T-cell (primary cell): ENCODE measurements at regions of chr19 and their contacts with region 1.

Region 1: DNA sequence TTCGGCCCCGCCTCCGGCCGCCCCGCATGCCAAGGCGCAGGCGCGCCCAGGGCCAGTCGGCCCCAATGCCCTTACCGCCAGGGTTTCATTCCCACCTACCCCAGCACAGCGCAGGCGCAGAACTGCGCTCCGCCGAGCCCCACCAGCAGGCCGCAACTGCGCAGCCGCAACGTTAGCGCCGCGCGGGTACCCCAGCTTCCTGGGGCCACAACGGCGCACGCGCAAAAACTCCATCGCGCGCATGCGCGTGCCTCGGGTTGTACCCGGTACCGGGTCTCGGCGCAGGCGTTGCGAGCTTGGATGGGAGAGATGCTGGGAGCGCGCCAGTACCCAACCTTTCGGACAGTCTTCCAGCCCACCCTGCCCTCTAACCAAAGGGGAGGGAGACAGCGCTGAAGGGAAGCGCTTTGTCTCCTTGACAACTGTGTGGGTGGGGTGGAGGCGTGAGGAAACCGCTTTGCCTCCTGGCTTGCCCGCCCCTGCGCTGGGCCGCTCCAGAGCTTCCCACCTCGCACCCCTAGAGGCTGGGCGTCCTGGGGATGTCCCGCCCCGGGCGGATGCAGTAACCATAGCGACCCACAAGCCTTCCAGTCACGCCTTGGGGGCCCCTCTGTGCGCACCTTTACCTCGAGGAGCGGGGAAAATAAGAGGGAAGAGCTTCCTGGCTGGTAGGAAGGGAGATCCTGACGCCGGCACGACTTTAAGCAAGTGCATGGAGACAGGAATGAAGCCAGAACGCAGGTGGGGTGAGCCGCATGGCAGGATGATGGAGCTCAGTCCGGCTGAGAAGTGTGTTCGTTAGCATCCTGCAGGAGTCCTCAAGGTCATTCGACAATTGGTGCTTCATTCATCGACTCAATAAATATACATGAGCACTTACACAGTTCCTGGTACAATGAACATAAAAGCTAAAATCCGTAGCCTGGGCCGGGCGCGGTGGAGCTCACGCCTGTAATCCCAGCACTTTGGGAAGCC is 525 bp upstream of the MYPOP start:
- DNase-seq: peak; percentile 96 to 100 (median 99)
- ATAC-seq: peak; percentile 85 to 89 (median 86)
- H3K4me3 ChIP-seq: peak overlapping the region; percentile 83 to 88
- H3K4me3 Mint-ChIP-seq: peak overlapping the region; percentile 91 to 95 (median 93)
- H3K27ac ChIP-seq: peak overlapping the region; percentile 78
- H3K27ac Mint-ChIP-seq: peak overlapping the region; percentile 86 to 89
- H3K4me1 ChIP-seq: peaks cover 4 to 30% of the 10 kb centered on the region in 2 experiments
- H3K4me1 Mint-ChIP-seq: peaks cover 16 to 25% (median 19%) of the 10 kb centered on the region in 3 donors
- H3K27me3 ChIP-seq: peaks cover 0 to 8% of the 10 kb centered on the region in 2 experiments
- H3K27me3 Mint-ChIP-seq: peaks cover 0 to 4% of the 10 kb centered on the region in 2 donors

Region 2: DNA sequence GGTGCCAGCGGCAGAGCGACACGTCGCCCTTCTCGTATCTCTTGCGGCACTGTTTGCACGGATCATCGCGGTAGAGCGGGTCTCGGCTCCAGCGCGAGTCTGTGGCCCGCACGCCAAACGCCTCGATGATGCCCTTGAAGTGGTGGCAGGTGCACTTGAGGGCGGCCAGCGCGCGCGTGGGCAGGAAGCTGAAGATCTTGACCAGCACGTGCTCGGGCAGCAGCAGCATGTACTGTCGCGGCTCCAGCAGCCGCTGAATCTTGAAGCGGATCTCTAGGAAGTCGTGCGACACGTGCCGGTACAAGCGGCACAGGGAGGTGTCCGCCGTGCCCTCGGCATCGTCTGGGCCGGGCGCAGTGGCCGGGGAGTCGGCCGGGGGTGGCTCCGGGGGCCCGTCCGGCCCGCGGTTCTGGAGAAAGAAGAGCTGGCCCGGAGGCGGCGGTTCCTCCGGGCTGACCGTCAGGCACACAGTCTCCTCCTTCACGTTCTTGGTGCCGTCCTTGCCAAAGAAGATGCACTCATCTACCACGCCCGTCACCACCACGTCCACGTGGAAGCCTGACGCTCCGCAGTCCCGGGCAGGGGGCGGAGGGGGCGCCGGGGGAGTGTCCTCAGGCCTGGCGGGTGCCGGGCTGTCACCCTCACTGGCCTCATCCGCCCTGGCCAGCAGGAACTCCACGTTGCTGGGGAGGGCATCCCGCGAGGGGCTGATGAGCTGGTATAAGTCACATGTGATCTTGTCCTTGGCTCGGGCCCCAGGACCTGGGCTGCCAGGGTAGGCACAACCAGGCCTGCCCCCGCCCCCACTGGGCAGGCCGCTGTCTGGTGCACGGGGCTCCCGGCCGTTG is 190.9 kb before region 1 on chr19:
- CTCF ChIA-PET with region 1: interaction called in 1 of 2 experiments, 11 read pairs
- POLR2A ChIA-PET with region 1: no interaction called
- DNase-seq: no peak
- ATAC-seq: no peak
- H3K4me3 ChIP-seq: no peak overlapping the region
- H3K4me3 Mint-ChIP-seq: no peak overlapping the region
- H3K27ac ChIP-seq: no peak overlapping the region
- H3K27ac Mint-ChIP-seq: no peak overlapping the region
- H3K4me1 ChIP-seq: peaks cover 6 to 20% of the 10 kb centered on the region in 2 experiments
- H3K4me1 Mint-ChIP-seq: peaks cover 36 to 42% (median 37%) of the 10 kb centered on the region in 3 donors
- H3K27me3 ChIP-seq: no peaks in the 10 kb centered on the region
- H3K27me3 Mint-ChIP-seq: no peaks in the 10 kb centered on the region

Region 3: DNA sequence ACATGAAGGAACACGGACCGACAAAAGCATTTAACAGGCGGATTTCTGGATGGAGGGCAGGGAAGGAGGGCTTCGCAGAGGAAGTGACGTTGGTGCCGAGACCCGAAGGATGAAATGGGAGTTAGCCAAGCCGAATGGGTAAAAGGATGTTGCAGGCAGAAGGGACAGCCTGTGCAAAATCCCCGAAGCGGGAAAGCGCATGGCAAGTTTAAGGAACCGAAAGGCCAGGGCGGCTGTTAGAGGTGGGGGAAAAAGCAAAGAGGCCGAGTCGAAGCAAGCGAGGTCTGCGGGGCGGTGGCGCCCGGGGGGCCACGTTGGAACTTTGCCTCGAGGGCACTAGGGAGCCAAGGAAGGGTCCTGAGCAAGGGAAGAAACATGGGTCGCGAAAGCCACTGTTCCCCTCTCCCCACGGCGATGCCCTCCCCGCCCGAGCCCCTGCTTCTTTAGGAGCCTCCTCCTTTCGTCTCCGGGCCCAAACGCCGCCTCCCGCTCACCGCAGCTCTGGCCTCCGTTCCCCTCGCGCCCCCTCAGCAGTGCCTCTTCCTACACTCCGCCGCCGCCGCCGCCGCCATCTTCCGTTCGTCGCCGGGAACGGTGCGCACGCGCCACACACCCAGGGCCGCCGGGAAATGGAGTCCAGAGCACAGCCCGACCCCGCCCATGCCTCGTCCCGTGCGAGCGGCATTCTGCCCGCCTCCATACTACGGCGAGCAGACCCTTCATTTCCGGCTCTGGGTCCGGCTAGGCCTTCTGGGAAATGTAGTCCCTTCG is 40.2 kb before region 1 on chr19 and contains the start of gene SYMPK:
- CTCF ChIA-PET with region 1: interaction called in 1 of 2 experiments, 15 read pairs
- POLR2A ChIA-PET with region 1: no interaction called
- DNase-seq: peak; percentile 95 to 99 (median 98)
- ATAC-seq: peak; percentile 96 to 98 (median 98)
- H3K4me3 ChIP-seq: peak within 1 kb of the TSS; percentile 90 to 95
- H3K4me3 Mint-ChIP-seq: peak within 1 kb of the TSS; percentile 92 to 99 (median 95)
- H3K27ac ChIP-seq: peak within 1 kb of the TSS; percentile 86
- H3K27ac Mint-ChIP-seq: peak within 1 kb of the TSS; percentile 70 to 93
- H3K4me1 ChIP-seq: peaks cover 0 to 32% of the 10 kb centered on the region in 2 experiments
- H3K4me1 Mint-ChIP-seq: peaks cover 23 to 43% (median 33%) of the 10 kb centered on the region in 3 donors
- H3K27me3 ChIP-seq: peaks cover 0 to 26% of the 10 kb centered on the region in 2 experiments
- H3K27me3 Mint-ChIP-seq: peaks cover 15 to 18% of the 10 kb centered on the region in 2 donors
- total RNA-seq, gene SYMPK: 89.7 to 102 (median 94.7) TPM

Region 4: DNA sequence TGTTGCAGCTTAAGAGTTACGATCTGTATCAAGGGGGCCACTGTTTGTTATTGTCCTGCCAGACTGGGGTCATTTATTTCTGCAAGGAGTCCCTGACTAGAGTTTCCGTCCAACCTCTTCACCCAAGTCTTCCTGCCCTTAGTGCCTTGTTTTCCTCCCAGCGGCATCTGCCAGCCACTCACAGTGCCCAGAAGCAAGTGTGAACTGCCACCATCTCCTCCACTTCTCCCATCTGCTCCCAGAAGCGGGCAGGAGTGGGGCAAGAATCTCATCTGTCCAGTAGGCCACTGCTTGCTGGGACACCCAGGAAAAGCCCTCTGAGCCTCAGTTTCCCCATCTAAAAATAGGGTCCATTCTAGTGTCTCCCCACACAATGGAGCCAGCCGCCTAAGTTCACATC is 66.7 kb after region 1 on chr19:
- CTCF ChIA-PET with region 1: interaction called in 1 of 2 experiments, 3 read pairs
- POLR2A ChIA-PET with region 1: interaction called in 1 of 2 experiments, 16 read pairs
- DNase-seq: no peak
- ATAC-seq: no peak
- H3K4me3 ChIP-seq: no peak overlapping the region
- H3K4me3 Mint-ChIP-seq: no peak overlapping the region
- H3K27ac ChIP-seq: no peak overlapping the region
- H3K27ac Mint-ChIP-seq: no peak overlapping the region
- H3K4me1 ChIP-seq: peaks cover 2 to 28% of the 10 kb centered on the region in 2 experiments
- H3K4me1 Mint-ChIP-seq: peaks cover 20 to 21% (median 20%) of the 10 kb centered on the region in 3 donors
- H3K27me3 ChIP-seq: peaks cover 14 to 74% of the 10 kb centered on the region in 2 experiments
- H3K27me3 Mint-ChIP-seq: peaks cover 64 to 74% of the 10 kb centered on the region in 2 donors